ENCODE measurements at regions of chr20 and their contacts with region 1.

Region 1: GRCh38 chr20:35447082-35447789 is 8.2 kb upstream of the CEP250 start:
- DNase-seq: peak; percentile 86
- H3K4me3 Mint-ChIP-seq: peak overlapping the region; percentile 57
- H3K27ac Mint-ChIP-seq: peak overlapping the region; percentile 63
- H3K4me1 Mint-ChIP-seq: peaks cover 11% of the 10 kb centered on the region
- H3K27me3 Mint-ChIP-seq: no peaks in the 10 kb centered on the region
- CTCF ChIP-seq: peak; percentile 96

Region 2: DNA sequence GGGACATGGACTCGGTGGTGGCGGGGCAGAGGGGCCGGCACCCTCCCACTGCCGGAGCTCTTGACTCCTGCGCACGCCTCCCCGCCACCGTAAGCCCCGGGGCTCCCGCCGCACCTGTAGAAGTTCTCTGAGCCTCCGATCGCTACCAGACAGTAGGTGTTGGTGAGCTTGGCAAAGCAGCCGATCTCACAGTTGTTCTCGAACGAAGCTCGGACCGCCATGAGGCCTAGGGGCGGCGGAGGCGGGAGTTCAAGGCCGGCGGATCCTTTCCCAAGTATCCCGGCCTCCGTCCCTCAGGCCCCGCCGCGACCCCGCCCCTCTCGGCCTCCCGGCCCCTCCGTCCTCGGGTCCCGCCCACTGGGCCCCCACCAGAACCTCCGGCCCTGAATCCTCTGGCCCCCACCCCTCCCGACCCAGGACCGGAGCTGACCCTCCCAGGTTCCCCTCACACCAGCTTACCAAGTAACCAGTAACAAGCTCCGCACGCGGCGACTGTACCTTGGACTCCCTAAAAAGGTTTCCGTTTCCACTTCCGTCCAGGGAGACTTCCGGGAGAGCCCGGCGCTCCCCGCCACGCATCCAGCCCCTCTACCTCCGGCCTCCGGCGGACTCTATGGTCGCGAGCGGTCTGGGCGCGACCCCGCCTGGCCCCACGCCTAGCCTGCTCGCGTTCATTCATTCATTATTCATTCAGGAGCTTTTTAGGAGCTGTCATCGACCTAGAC is 162.8 kb before region 1 on chr20 and contains the start of gene EIF6:
- CTCF ChIA-PET with region 1: interaction called, 6 read pairs
- POLR2A ChIA-PET with region 1: interaction called, 17 read pairs
- intact Hi-C with region 1: no loop called
- DNase-seq: peak; percentile 86
- H3K4me3 Mint-ChIP-seq: peak within 1 kb of the TSS; percentile 89
- H3K27ac Mint-ChIP-seq: peak within 1 kb of the TSS; percentile 90
- H3K4me1 Mint-ChIP-seq: peaks cover 25% of the 10 kb centered on the region
- H3K27me3 Mint-ChIP-seq: no peaks in the 10 kb centered on the region
- CTCF ChIP-seq: no peak
- total RNA-seq, gene EIF6: 322 and 354 TPM in 2 replicates

Region 3: GRCh38 chr20:35432430-35432735 is 14.9 kb before region 1 on chr20:
- CTCF ChIA-PET with region 1: interaction called, 20 read pairs
- POLR2A ChIA-PET with region 1: interaction called, 6 read pairs
- intact Hi-C with region 1: no loop called
- DNase-seq: no peak
- H3K4me3 Mint-ChIP-seq: no peak overlapping the region
- H3K27ac Mint-ChIP-seq: no peak overlapping the region
- H3K4me1 Mint-ChIP-seq: no peaks in the 10 kb centered on the region
- H3K27me3 Mint-ChIP-seq: no peaks in the 10 kb centered on the region
- CTCF ChIP-seq: no peak

Region 4: DNA sequence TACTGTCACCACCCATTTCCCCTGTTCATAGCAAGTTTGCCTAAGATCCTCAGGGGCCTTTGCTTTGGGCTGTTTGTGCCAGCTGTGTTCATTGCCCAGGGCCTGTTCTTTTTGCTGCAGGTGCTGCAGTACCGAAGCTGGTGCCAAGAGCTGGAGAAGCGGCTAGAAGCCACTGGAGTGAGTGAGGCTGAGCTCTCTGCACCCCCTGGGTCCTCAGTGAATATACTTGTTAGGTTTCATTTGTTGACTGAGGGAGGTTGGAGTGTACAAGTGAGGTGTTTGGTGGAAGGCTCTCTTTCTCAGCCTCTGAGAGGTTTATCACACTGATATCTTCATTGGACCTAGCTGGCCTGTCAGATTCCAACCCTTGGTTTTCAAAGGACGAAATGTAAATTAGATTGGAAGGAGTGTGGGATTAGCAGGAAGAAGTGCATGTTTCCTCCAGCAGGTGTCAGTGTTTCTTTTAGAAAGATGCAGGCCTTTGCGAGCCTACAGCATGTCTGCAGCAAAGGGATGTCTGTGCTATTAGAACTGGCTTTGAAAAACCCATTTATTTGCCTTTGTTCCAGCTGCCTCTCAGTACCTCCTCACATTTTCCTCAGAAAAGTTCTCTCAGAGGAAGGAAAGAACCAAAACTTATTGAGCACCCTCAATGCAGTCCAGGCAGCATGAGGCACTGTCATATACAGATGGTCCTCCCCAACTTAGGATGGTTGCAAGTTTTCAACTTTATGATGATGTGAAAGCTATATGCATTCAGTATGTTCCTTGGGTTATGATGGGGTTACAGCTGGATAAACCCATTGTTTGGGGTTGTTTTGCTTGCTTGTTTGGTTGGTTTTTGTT is 16.4 kb after region 1 on chr20:
- CTCF ChIA-PET with region 1: interaction called, 18 read pairs
- POLR2A ChIA-PET with region 1: interaction called, 7 read pairs
- intact Hi-C with region 1: no loop called
- DNase-seq: peak; percentile 66
- H3K4me3 Mint-ChIP-seq: no peak overlapping the region
- H3K27ac Mint-ChIP-seq: no peak overlapping the region
- H3K4me1 Mint-ChIP-seq: peaks cover 8% of the 10 kb centered on the region
- H3K27me3 Mint-ChIP-seq: no peaks in the 10 kb centered on the region
- CTCF ChIP-seq: peak; percentile 76

Region 5: GRCh38 chr20:35511814-35512420 is 64.7 kb after region 1 on chr20:
- CTCF ChIA-PET with region 1: no interaction called
- POLR2A ChIA-PET with region 1: no interaction called
- intact Hi-C with region 1: no loop called
- DNase-seq: peak; percentile 51
- H3K4me3 Mint-ChIP-seq: no peak overlapping the region
- H3K27ac Mint-ChIP-seq: no peak overlapping the region
- H3K4me1 Mint-ChIP-seq: peaks cover 13% of the 10 kb centered on the region
- H3K27me3 Mint-ChIP-seq: no peaks in the 10 kb centered on the region
- CTCF ChIP-seq: peak; percentile 67